Activated T-helper 1 cell treated with anti-CD3 and anti-CD28 coated beads, Interleukin-12 subunit alpha, Interleukin-12 subunit beta, Interleukin-2, Interleukin-4 antibody, amounts not matched to agents 30 ng/mL and 10 ng/mL and 1 ng/mL, durations not matched to agents 14 hours and 24 hours and 36 hours (primary cell): ENCODE measurements at regions of chr3 and their contacts with region 1.

Region 1: DNA sequence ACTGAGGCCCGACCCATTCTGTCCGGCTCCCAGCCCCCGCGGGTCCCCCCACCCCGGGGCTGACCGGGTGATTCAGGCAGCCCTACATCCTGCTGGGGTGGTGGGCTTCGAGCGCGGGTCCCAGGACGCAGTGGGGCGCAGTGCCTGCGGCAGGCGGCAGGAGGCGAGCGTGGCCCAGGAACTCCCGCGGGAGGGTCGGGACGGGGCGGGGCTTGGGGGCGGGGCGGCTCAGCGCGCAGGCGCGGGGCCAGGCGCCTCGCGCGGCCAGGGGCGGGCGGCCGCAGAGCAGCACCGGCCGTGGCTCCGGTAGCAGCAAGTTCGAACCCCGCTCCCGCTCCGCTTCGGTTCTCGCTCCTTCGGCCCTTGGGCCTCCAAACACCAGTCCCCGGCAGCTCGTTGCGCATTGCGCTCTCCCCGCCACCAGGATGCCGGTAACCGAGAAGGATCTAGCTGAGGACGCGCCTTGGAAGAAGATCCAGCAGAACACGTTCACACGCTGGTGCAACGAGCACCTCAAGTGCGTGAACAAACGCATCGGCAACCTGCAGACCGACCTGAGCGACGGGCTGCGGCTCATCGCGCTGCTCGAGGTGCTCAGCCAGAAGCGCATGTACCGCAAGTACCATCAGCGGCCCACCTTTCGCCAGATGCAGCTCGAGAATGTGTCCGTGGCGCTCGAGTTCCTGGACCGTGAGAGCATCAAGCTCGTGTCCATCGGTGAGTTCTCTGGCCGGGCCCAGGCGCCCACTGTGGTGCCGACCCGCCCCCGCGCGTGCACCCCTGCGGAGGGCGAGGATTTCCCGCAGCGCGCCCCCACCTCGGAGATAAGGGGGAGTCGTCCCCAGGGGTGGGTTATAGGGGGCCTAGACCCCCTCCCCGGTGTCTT is at the start of gene FLNB:
- DNase-seq: peak; percentile 65
- H3K4me3 Mint-ChIP-seq: peak within 1 kb of the TSS; percentile 85
- H3K27ac Mint-ChIP-seq: peak within 1 kb of the TSS; percentile 70
- H3K4me1 Mint-ChIP-seq: peaks cover 39% of the 10 kb centered on the region
- H3K27me3 Mint-ChIP-seq: peaks cover 2% of the 10 kb centered on the region
- total RNA-seq, gene FLNB: 22.3 and 24.1 TPM in 2 replicates

Region 2: GRCh38 chr3:57673156-57673555 is 335.2 kb before region 1 on chr3:
- intact Hi-C with region 1: no loop called
- DNase-seq: no peak
- H3K4me3 Mint-ChIP-seq: no peak overlapping the region
- H3K27ac Mint-ChIP-seq: no peak overlapping the region
- H3K4me1 Mint-ChIP-seq: peaks cover 40% of the 10 kb centered on the region
- H3K27me3 Mint-ChIP-seq: no peaks in the 10 kb centered on the region

Region 3: DNA sequence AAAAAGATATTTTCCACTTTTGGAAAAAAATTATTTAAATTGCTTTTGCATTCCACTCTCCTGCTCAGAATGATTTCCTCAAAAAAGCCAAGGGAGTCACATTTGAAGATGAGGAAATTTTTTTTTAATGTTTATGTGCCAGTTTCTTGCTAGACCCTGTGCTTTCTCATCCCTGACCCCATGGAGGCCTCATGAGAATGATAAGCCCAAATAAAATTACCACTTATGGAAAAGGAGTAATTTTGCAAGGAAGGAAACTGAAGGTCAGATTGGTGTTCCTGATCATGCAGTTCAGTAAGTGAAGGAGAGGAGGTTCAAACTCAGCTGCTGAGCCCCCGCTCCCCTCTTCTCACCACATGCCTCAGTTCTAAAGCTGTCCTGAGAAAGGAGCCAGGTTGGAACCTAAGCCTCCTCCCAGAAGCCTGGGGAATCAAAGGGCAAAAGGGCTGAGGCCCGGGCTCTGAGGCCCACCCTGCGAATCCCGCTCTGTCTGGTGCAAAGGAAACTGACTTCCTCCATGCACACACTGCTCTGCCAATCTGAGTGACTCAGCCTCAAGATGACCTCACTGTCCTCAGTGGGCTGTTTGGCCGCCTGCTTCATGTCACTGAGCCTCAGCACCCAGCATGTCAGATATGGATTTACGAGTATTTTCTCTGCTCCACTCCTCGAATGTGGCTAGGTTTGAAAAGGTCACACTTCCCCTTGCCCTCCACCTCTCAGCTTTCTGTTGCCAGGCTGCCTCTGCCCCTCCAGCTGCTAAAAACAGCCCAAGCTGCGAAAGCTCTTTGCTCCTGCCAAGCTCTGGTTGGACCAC is 57.1 kb before region 1 on chr3:
- intact Hi-C with region 1: no loop called
- DNase-seq: no peak
- H3K4me3 Mint-ChIP-seq: no peak overlapping the region
- H3K27ac Mint-ChIP-seq: no peak overlapping the region
- H3K4me1 Mint-ChIP-seq: no peaks in the 10 kb centered on the region
- H3K27me3 Mint-ChIP-seq: no peaks in the 10 kb centered on the region

Region 4: GRCh38 chr3:58034738-58035523 is 26.5 kb after region 1 on chr3:
- intact Hi-C with region 1: loop called (anchors 1 kb)
- DNase-seq: peak; percentile 66
- H3K4me3 Mint-ChIP-seq: peak overlapping the region; percentile 78
- H3K27ac Mint-ChIP-seq: peak overlapping the region; percentile 85
- H3K4me1 Mint-ChIP-seq: peaks cover 51% of the 10 kb centered on the region
- H3K27me3 Mint-ChIP-seq: peaks cover 7% of the 10 kb centered on the region

Region 5: GRCh38 chr3:58167431-58168351 is 159.3 kb after region 1 on chr3:
- intact Hi-C with region 1: loop called (anchors 2 kb)
- DNase-seq: peak; percentile 47
- H3K4me3 Mint-ChIP-seq: no peak overlapping the region
- H3K27ac Mint-ChIP-seq: no peak overlapping the region
- H3K4me1 Mint-ChIP-seq: no peaks in the 10 kb centered on the region
- H3K27me3 Mint-ChIP-seq: no peaks in the 10 kb centered on the region

Region 6: GRCh38 chr3:58217209-58217811 is 208.9 kb after region 1 on chr3:
- intact Hi-C with region 1: loop called (anchors 1 kb)
- DNase-seq: peak; percentile 41
- H3K4me3 Mint-ChIP-seq: no peak overlapping the region
- H3K27ac Mint-ChIP-seq: peak overlapping the region; percentile 46
- H3K4me1 Mint-ChIP-seq: peaks cover 37% of the 10 kb centered on the region
- H3K27me3 Mint-ChIP-seq: peaks cover 11% of the 10 kb centered on the region